Right ventricle myocardium inferior (tissue), 1 donor: ENCODE measurements at regions of chrX and their contacts with region 1.

Region 1: DNA sequence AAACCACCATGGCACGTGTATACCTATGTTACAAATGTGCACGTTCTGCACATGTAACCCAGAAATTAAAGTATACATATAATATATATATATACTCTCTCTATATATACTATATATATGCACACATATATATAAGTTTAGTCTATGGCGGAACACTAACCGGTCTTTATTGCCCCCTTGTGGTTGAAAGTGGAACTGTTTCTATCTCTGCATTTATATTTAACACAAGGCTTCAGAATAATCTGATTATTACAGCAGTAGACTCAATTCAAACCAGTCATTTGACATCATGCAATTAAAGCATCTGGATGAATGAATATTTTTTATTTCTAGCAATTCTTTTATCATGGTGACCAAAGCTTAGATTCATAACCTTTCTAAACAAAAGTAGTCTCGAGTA is 14.6 kb downstream of the RAB9B start:
- DNase-seq: no peak
- ATAC-seq: no peak

Region 2: DNA sequence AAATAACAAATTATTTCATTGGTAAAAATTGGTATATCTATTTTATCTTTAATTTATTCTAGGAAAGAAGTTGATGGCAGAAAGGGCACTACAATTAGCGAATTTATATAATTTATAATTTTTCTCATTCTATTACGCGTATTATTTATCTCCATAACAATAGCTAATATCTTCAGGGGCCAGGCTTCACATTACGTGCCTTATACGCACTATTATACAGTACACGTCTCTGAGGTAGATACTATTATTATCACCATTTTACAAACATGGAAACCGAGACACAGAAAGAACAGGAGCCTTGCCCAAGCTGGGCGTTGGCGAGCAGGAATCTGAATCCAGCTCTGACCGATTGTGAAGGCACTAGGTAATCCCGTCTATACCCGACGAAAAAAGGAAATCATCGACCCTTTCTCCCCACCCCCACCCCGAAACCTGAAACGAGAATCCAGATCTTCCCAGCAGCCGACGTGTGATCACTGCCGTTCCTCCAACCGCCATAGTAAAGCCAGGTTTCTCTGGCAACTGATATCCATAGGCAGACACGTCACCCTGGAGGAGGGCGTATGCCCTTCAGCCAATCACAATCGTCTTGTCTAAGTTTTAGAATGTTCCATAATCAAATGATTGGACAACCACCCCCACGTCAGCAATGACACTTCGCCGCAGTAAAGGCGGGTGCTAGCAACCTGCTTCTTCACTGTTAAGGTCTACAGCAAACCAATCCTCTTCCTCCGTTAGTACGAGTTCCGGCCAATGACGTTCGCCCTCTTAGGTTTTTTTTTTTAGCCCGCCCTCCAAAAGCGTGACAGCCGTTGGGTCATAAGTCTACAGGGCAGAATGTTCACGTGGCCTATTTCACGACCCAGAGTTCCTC is 131.1 kb before region 1 on chrX and contains the start of gene MORF4L2:
- intact Hi-C with region 1: loop called (anchors 2 kb)
- DNase-seq: peak; percentile 91
- ATAC-seq: peak; percentile 94
- total RNA-seq, gene MORF4L2: 159 TPM

Region 3: GRCh38 chrX:103878466-103879122 is 61.1 kb after region 1 on chrX:
- intact Hi-C with region 1: no loop called
- DNase-seq: no peak
- ATAC-seq: no peak

Region 4: GRCh38 chrX:103954259-103954658 is 136.8 kb after region 1 on chrX:
- intact Hi-C with region 1: no loop called
- DNase-seq: no peak
- ATAC-seq: no peak